Sigmoid colon (tissue), 7 donors: ENCODE measurements at regions of chr4 and their contacts with region 1.

Region 1: GRCh38 chr4:76087007-76087769 is 12.7 kb downstream of the ART3 start:
- DNase-seq: no peak
- H3K4me3 ChIP-seq: peak overlapping the region in 1 of 4 donors; percentile 9
- H3K27ac ChIP-seq: no peak overlapping the region
- H3K4me1 ChIP-seq: peaks cover 0 to 5% (median 0%) of the 10 kb centered on the region in 4 donors
- H3K27me3 ChIP-seq: no peaks in the 10 kb centered on the region
- CTCF ChIP-seq: peak in 3 of 4 experiments; percentile 27 to 48 (median 45)
- EP300 ChIP-seq: no peak
- POLR2A ChIP-seq: no peak

Region 2: GRCh38 chr4:76067652-76068286 is 19.4 kb before region 1 on chr4:
- intact Hi-C with region 1: loop called (anchors 2 kb)
- DNase-seq: peak; percentile 75
- H3K4me3 ChIP-seq: no peak overlapping the region
- H3K27ac ChIP-seq: no peak overlapping the region
- H3K4me1 ChIP-seq: peaks cover 0 to 4% (median 0%) of the 10 kb centered on the region in 4 donors
- H3K27me3 ChIP-seq: no peaks in the 10 kb centered on the region
- CTCF ChIP-seq: peak; percentile 46 to 77 (median 60)
- EP300 ChIP-seq: no peak
- POLR2A ChIP-seq: no peak